A549 (cell line): ENCODE measurements at regions of chr4 and their contacts with region 1.

Region 1: GRCh38 chr4:74133786-74134499 is 24.0 kb upstream of the MTHFD2L start:
- DNase-seq: peak; percentile 18 to 89
- ATAC-seq: peak; percentile 95 to 97
- H3K4me3 ChIP-seq: no peak overlapping the region
- H3K27ac ChIP-seq: peak overlapping the region; percentile 80 to 82
- H3K4me1 ChIP-seq: peaks cover 6% of the 10 kb centered on the region; the same call in 2 of the 3 replicates
- CTCF ChIP-seq: peak; percentile 67
- EP300 ChIP-seq: no peak
- POLR2A ChIP-seq: no peak
- RAD21 ChIP-seq: peak; percentile 95 to 96

Region 2: DNA sequence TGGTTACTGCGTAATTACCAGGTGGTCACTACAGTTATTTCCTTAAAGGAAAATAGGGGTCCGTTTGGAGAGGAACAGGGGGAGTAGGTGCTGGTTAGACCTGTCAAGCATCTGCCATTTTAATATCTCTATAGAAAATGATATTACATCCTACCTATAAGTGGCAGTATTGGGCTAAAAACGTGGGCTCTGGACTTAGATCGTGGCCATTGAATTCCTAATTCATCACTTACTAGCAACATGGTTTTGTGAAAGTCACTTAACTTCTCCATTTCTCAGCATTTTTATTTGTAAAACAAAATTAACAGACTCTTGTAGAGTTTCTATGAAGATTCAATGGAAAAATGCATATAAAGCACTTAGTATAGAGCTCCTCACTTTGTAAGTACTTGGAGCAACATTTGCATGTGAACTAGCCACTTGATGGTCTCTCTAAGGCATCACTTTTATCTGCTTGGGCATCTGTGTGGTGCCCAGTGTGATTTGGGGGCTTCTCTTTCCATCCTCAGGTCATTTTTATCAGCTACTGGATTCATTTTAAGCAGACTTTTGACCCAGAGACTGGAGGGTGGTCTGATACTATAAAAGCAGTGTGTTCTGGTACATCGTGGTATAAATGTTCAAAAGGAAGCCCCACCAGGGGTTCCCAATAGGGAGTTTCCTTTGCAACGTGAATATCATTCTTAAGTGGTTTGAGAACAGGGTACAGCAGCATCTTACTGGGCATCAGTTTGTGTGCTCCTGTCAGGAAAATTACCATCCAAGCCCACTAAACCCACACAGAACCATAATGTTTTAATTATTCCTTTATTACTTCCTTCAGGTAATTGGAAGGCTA is 471.0 kb before region 1 on chr4:
- CTCF ChIA-PET with region 1: interaction called, 38 read pairs
- POLR2A ChIA-PET with region 1: no interaction called
- DNase-seq: peak; percentile 19 to 61
- ATAC-seq: peak; percentile 54 to 85; a peak in 4 of 6 replicates
- H3K4me3 ChIP-seq: no peak overlapping the region
- H3K27ac ChIP-seq: peak overlapping the region; percentile 54 to 83
- H3K4me1 ChIP-seq: peaks cover 5% of the 10 kb centered on the region; the same call in 2 of the 3 replicates
- CTCF ChIP-seq: peak; percentile 63
- EP300 ChIP-seq: no peak
- POLR2A ChIP-seq: no peak
- RAD21 ChIP-seq: peak; percentile 83 to 84

Region 3: GRCh38 chr4:73998040-73999011 is 135.6 kb before region 1 on chr4 and contains the start of gene CXCL5:
- CTCF ChIA-PET with region 1: interaction called, 30 read pairs
- POLR2A ChIA-PET with region 1: interaction called, 17 read pairs
- DNase-seq: peak; percentile 47 to 92
- ATAC-seq: peak; percentile 97 to 98
- H3K4me3 ChIP-seq: peak within 1 kb of the TSS; percentile 52
- H3K27ac ChIP-seq: peak within 1 kb of the TSS; percentile 93 to 99
- H3K4me1 ChIP-seq: peaks cover 16% of the 10 kb centered on the region
- CTCF ChIP-seq: peak; percentile 40
- EP300 ChIP-seq: peak in 1 of 2 experiments; percentile 25; a peak in 1 of 5 replicates
- POLR2A ChIP-seq: peak; percentile 50
- RAD21 ChIP-seq: peak; percentile 78 to 79
- polyA plus RNA-seq, gene CXCL5: 116 and 195 TPM in 2 replicates

Region 4: GRCh38 chr4:74021601-74022000 is 112.3 kb before region 1 on chr4:
- CTCF ChIA-PET with region 1: no interaction called
- POLR2A ChIA-PET with region 1: no interaction called
- DNase-seq: no peak
- ATAC-seq: no peak
- H3K4me3 ChIP-seq: no peak overlapping the region
- H3K27ac ChIP-seq: peak overlapping the region; percentile 77 to 86; a peak in 5 of 6 replicates
- H3K4me1 ChIP-seq: peaks cover 22% of the 10 kb centered on the region
- CTCF ChIP-seq: no peak
- EP300 ChIP-seq: no peak
- POLR2A ChIP-seq: no peak
- RAD21 ChIP-seq: no peak

Region 5: DNA sequence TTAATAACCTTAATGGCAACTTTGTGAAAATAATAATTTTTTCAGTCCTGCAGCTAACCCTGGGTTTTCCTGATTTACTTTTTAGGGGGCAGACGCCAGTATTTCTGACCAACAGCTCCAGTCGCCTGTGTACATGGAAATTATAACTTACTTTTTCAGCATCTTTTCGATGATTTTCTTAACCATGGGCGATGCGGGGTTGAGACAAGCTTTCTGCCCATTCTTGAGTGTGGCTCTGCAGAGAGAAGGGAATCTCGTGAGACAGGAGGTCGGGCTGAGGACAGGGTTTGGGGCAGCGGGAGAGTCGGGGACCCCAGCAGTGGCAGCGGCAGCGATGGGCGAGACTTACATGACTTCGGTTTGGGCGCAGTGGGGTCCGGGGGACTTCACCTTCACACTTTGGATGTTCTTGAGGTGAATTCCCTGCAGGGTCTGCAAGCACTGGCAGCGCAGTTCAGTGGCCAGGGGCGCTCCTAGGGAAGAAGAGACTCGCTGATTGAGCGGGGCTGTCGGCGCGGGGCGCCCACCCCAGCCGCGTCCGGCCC is 35.4 kb before region 1 on chr4:
- CTCF ChIA-PET with region 1: interaction called, 40 read pairs
- POLR2A ChIA-PET with region 1: interaction called, 17 read pairs
- DNase-seq: no peak
- ATAC-seq: peak in 1 of 2 experiments; percentile 1; a peak in 2 of 6 replicates
- H3K4me3 ChIP-seq: peak overlapping the region; percentile 85
- H3K27ac ChIP-seq: peak overlapping the region; percentile 96 to 99
- H3K4me1 ChIP-seq: peaks cover 49% of the 10 kb centered on the region
- CTCF ChIP-seq: no peak; the same call in 2 of the 3 replicates
- EP300 ChIP-seq: no peak
- POLR2A ChIP-seq: no peak
- RAD21 ChIP-seq: peak in 1 of 2 experiments; percentile 20; a peak in 1 of 5 replicates

Region 6: DNA sequence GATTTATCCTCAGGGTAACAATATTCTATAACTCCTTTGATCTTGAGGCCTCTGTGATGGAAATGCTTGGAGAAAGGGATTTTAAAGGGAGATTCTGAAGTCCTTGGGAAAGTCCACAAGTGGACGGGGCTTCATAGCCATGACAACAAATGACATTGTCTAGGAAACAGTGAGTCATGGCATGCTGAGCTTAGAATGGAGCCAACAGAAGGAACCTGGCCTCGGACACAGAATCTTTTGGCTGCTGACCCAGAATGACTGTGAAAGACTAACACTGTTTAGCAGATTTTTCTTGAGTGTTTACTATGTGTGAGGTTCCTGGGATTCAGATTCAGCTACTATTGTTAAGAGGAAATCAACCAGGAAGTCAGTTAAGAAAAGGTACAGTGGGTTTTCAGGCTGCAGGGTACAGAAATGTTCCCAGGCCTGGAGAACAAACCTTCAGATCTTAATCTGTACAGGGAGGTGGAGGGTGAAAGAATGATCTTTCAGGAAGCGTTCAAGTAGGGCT is 16.9 kb before region 1 on chr4:
- CTCF ChIA-PET with region 1: interaction called, 37 read pairs
- POLR2A ChIA-PET with region 1: no interaction called
- DNase-seq: peak; percentile 41 to 93
- ATAC-seq: peak; percentile 94 to 96
- H3K4me3 ChIP-seq: no peak overlapping the region
- H3K27ac ChIP-seq: peak overlapping the region; percentile 95 to 99
- H3K4me1 ChIP-seq: peaks cover 54% of the 10 kb centered on the region
- CTCF ChIP-seq: no peak
- EP300 ChIP-seq: peak in 1 of 2 experiments; percentile 40; a peak in 1 of 5 replicates
- POLR2A ChIP-seq: no peak
- RAD21 ChIP-seq: 0 out of 5 replicates have a peak, but pooled peaks of 1 of the 2 experiments have one; percentile 15

Region 7: GRCh38 chr4:74320559-74321118 is 186.7 kb after region 1 on chr4:
- CTCF ChIA-PET with region 1: no interaction called
- POLR2A ChIA-PET with region 1: no interaction called
- DNase-seq: peak; percentile 20 to 78
- ATAC-seq: peak; percentile 87 to 93
- H3K4me3 ChIP-seq: no peak overlapping the region
- H3K27ac ChIP-seq: peak overlapping the region; percentile 67 to 75
- H3K4me1 ChIP-seq: peaks cover 26% of the 10 kb centered on the region
- CTCF ChIP-seq: peak; percentile 77
- EP300 ChIP-seq: no peak
- POLR2A ChIP-seq: no peak
- RAD21 ChIP-seq: peak; percentile 85 to 91